Endothelial cell of umbilical vein (primary cell): ENCODE measurements at regions of chr7 and their contacts with region 1.

Region 1: GRCh38 chr7:116984917-116985316 is 31.6 kb downstream of the ST7 start:
- DNase-seq: peak; percentile 45
- H3K4me3 ChIP-seq: no peak overlapping the region
- H3K27ac ChIP-seq: no peak overlapping the region
- H3K4me1 ChIP-seq: no peaks in the 10 kb centered on the region
- H3K27me3 ChIP-seq: no peaks in the 10 kb centered on the region
- CTCF ChIP-seq: peak; percentile 29 to 44
- POLR2A ChIP-seq: no peak

Region 2: DNA sequence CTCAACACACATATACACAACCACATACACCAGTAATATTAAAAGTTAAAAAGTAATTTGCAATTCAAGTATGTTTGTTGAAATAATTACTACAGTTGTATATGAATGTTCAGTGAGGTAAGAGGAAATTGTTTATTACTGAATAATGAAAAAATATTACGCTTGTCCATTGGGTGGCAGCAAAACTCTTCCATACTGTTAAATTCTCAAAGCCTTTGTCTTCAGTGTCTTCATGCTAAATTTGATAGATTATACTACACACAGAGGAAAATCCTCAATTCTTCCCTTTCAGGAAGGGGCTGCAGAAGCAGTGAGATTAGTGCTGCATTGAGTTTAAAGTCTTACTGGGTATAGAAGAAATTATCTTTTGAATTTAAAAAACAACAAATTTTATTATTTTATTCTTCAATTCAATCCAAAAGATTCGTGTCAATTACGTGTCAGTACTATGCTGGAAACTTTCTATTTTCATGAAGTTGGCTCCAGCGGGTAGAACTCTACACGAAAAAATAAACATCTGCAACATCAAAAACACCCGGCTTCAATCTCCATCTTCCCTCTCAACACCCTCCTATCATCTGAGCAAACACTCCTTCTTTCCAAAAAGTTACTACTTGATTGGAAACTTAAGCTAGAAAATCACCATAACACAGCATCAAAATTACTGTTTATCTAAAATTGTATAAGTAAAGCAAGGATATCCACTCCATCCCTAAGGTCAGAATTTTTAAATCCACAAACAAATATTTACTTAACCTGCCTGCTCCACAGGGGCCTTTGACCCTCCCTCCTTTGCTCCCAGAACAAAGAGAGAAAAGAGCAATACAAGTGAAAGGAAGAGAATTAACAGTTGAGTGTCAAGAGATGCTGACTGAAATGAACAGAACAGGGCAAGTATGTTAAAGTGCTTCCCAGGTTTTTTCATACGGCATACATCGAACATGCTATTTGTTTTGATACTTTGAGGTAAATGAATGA is 811.6 kb before region 1 on chr7:
- CTCF ChIA-PET with region 1: interaction called, 4 read pairs
- POLR2A ChIA-PET with region 1: no interaction called
- dilution Hi-C with region 1: no loop called
- intact Hi-C with region 1: loop called (anchors 10 kb)
- DNase-seq: peak; percentile 84
- H3K4me3 ChIP-seq: no peak overlapping the region
- H3K27ac ChIP-seq: no peak overlapping the region
- H3K4me1 ChIP-seq: no peaks in the 10 kb centered on the region
- H3K27me3 ChIP-seq: peaks cover 0 to 3% of the 10 kb centered on the region in 2 experiments
- CTCF ChIP-seq: peak in 1 of 2 donors; percentile 20
- POLR2A ChIP-seq: no peak

Region 3: DNA sequence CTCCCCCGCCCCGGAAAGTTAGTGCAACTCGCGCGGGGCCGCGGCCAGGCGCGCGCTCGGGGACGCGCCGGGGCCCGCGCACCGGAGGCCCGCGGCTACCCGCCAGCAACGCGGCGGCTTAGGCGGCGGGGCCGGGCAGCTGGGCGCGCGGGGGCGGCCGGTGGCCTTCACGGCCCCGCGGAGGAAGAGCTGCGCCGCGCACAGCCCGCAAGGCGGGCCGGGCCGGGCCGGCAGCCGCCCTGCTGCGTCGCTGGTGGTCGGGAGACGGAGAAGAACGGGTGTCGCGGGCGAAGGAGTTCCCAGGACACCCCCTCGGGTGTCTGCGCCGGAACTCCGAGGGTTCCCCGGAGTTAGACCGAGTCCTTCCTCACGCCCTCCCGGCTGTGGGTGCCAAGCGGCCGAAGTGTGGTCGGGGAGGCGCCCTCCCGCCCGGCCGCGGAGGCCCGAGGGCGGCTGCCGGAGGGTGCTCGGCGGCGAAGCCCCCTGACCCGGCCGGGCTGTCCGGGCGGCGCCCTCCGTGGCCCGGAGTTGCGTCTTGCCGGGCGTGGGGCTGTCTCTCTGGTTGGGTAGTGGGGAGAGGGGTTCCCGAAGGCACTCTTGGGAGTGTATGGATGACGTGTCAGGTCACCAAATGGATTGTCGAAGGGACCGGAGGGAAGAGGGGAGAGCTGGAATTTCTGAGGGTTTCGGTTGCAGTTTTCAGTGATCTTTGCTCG is 31.0 kb before region 1 on chr7:
- CTCF ChIA-PET with region 1: interaction called, 13 read pairs
- POLR2A ChIA-PET with region 1: no interaction called
- dilution Hi-C with region 1: no loop called
- intact Hi-C with region 1: no loop called
- DNase-seq: peak; percentile 80
- H3K4me3 ChIP-seq: peak overlapping the region; percentile 88 to 92 (median 89)
- H3K27ac ChIP-seq: peak overlapping the region; percentile 95
- H3K4me1 ChIP-seq: peaks cover 24% of the 10 kb centered on the region
- H3K27me3 ChIP-seq: no peaks in the 10 kb centered on the region
- CTCF ChIP-seq: no peak
- POLR2A ChIP-seq: peak; percentile 48

Region 4: DNA sequence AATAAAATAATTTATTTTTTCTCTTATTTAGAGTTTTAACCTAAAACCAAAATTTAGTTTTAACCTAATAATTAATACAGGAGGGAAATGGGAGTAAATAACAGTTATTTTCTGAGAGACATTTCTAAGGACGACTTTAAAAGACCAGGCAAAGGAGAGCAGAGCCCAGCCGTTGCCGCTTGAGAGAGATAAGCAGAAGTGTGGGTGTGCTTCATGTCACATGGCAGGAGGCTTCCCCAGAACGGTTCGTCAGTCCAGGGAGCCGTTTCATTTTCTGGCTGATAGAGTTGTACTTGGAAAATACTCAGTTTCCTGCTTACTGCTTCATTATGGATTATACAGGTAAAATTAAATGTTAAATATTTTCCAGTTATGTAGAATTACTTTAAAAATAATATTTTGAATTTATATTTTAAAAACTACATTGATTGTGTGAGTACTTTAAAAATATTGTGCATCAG is 29.8 kb after region 1 on chr7:
- CTCF ChIA-PET with region 1: interaction called, 141 read pairs
- POLR2A ChIA-PET with region 1: no interaction called
- dilution Hi-C with region 1: no loop called
- intact Hi-C with region 1: no loop called
- DNase-seq: peak; percentile 59
- H3K4me3 ChIP-seq: no peak overlapping the region
- H3K27ac ChIP-seq: no peak overlapping the region
- H3K4me1 ChIP-seq: peaks cover 8% of the 10 kb centered on the region
- H3K27me3 ChIP-seq: no peaks in the 10 kb centered on the region
- CTCF ChIP-seq: no peak
- POLR2A ChIP-seq: no peak

Region 5: DNA sequence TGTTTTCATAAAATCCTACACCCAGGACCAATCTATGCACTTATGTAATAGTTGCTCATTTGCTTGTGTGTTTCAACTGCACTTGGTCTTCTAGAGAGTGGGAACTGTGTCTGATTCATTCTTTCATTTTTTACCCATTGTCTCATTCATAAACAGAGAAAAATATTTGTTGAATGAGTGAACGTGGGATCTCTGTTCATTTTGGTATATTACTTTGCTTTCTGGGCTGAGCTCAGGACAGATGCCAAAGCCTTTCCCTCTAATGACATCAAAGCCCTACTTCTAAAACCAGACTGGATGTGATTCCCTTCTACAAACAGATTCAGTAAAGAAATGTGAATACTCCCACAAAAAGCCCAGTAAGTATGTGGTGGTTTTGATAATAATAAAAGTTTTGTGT is 113.5 kb after region 1 on chr7:
- CTCF ChIA-PET with region 1: interaction called, 15 read pairs
- POLR2A ChIA-PET with region 1: no interaction called
- dilution Hi-C with region 1: no loop called
- intact Hi-C with region 1: no loop called
- DNase-seq: peak; percentile 46
- H3K4me3 ChIP-seq: no peak overlapping the region
- H3K27ac ChIP-seq: no peak overlapping the region
- H3K4me1 ChIP-seq: peaks cover 4% of the 10 kb centered on the region
- H3K27me3 ChIP-seq: no peaks in the 10 kb centered on the region
- CTCF ChIP-seq: no peak
- POLR2A ChIP-seq: no peak

Region 6: GRCh38 chr7:117127585-117128168 is 142.8 kb after region 1 on chr7:
- CTCF ChIA-PET with region 1: interaction called, 700 read pairs
- POLR2A ChIA-PET with region 1: interaction called, 3 read pairs
- dilution Hi-C with region 1: no loop called
- intact Hi-C with region 1: no loop called
- DNase-seq: peak; percentile 74
- H3K4me3 ChIP-seq: no peak overlapping the region
- H3K27ac ChIP-seq: no peak overlapping the region
- H3K4me1 ChIP-seq: peaks cover 29% of the 10 kb centered on the region
- H3K27me3 ChIP-seq: no peaks in the 10 kb centered on the region
- CTCF ChIP-seq: peak; percentile 41 to 45
- POLR2A ChIP-seq: no peak